Ovary (tissue), 10 donors: ENCODE measurements at regions of chr1 and their contacts with region 1.

Region 1: DNA sequence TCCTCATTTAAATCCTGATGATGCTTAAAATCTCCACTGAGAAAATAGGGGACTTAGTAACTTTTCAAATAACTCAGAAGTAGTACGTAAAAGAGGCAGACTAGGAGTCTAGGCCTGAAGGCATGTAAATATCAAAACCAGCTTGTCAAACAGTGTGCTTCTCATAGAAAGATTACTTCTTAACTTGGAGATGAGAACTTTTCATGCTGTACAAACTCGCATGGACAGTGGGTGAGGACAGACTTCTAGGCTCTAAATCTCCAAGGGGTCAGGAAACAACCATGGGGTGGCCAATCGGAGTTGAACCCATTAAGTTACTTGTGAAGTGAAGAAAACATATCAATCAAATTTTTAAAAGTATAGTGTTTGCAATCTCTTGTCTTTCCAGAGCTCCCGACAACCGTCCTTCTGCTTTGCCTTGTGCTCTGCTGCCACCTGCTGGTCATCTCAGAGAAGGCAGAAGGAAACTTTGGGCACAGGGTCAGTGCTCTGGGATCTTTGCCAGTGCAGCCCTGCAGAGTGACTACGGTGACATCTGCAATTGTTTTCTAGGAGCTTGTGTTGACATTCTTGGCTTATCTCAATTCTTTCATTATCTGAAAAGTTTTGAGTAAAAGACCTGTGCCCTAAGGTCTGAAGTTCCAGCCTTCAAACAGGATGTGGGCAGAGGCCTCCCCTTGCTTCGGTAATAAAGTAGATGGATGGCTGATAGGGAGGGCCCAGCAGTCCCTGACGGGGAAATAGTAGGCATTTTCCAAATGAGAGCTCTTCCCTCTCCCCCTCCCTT is 105.1 kb upstream of the PDE4B start:
- DNase-seq: peak; percentile 75 to 89 (median 86)
- H3K4me3 ChIP-seq: no peak overlapping the region
- H3K27ac ChIP-seq: no peak overlapping the region
- H3K4me1 ChIP-seq: no peaks in the 10 kb centered on the region
- H3K27me3 ChIP-seq: no peaks in the 10 kb centered on the region
- CTCF ChIP-seq: peak; percentile 75 to 93 (median 90)
- EP300 ChIP-seq: no peak
- POLR2A ChIP-seq: no peak

Region 2: DNA sequence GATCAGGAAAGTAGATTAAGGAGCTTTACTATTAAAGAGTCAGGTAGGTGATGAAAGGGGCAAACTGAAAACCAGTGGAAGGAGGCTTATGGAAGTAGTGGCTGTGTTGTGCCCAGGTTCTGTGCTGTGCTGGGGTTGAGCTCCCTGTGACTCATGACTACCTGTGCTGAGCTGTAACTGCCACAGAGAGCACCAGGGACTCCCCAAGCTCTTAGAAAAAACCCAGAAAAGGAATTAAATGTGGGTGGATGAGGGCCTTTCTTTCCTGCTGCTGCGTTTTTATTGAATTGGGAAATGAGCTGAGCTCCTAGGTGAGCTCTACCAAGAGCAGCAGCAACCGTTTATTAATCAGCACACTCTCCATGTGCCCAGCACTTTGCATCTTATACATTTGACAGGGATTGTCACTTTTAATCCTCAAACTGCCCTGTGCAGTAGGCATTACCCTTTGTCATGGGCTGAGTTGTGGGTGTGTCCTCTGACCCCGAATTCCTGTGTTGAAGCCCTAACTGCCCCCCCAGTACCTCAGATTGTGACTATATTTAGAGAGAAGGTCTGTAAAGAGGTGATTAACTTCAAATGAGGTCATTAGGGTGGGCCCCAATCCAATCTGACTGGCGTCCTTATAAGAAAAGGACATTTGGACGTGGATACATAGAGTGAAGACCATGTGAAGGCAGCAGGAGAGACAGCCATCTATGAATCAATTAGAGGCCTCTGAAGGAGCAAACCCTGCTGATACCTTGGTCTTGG is 474.2 kb before region 1 on chr1:
- intact Hi-C with region 1: loop called in 3 of 4 experiments (anchors 5 to 10 kb)
- DNase-seq: no peak
- H3K4me3 ChIP-seq: no peak overlapping the region
- H3K27ac ChIP-seq: no peak overlapping the region
- H3K4me1 ChIP-seq: no peaks in the 10 kb centered on the region
- H3K27me3 ChIP-seq: no peaks in the 10 kb centered on the region
- CTCF ChIP-seq: no peak
- EP300 ChIP-seq: no peak
- POLR2A ChIP-seq: no peak

Region 3: GRCh38 chr1:65419681-65420589 is 267.7 kb before region 1 on chr1:
- intact Hi-C with region 1: loop called in 1 of 4 experiments (anchors 10 kb)
- DNase-seq: peak; percentile 98 to 99 (median 99)
- H3K4me3 ChIP-seq: peak overlapping the region; percentile 95
- H3K27ac ChIP-seq: peak overlapping the region; percentile 31 to 96
- H3K4me1 ChIP-seq: peaks cover 16% of the 10 kb centered on the region
- H3K27me3 ChIP-seq: no peaks in the 10 kb centered on the region
- CTCF ChIP-seq: no peak
- EP300 ChIP-seq: no peak
- POLR2A ChIP-seq: peak; percentile 56

Region 4: GRCh38 chr1:65431111-65431705 is 256.4 kb before region 1 on chr1:
- intact Hi-C with region 1: loop called in 2 of 4 experiments (anchors 5 to 10 kb)
- DNase-seq: no peak
- H3K4me3 ChIP-seq: no peak overlapping the region
- H3K27ac ChIP-seq: no peak overlapping the region
- H3K4me1 ChIP-seq: peaks cover 2% of the 10 kb centered on the region
- H3K27me3 ChIP-seq: no peaks in the 10 kb centered on the region
- CTCF ChIP-seq: peak in 2 of 3 donors; percentile 47 to 49
- EP300 ChIP-seq: no peak
- POLR2A ChIP-seq: no peak